GM12878 (cell line): ENCODE measurements at regions of chr22 and their contacts with region 1.

Region 1: DNA sequence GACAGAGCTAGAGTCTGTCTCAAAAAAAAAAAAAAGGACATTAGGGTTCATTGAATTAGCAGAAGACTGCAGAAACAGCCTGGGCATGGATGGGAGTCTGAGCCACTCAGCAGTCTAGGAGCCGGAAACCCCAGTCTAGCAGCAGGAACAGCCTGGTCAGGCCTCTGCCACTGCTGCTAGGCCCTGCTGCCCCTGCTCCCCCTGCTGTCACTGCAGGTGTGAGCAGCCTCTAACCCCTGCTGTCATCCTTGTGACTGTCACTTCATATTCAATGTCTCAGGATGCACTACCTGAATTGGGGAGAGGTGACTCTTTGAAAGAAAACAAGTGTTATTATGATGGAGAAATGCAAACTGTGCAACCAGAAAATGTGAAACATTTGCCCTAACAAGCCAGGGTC is 7.0 kb upstream of the DDX17 start:
- DNase-seq: no peak
- ATAC-seq: peak; percentile 88
- H3K4me3 ChIP-seq: no peak overlapping the region
- H3K27ac ChIP-seq: no peak overlapping the region
- H3K4me1 ChIP-seq: no peaks in the 10 kb centered on the region
- H3K27me3 ChIP-seq: no peaks in the 10 kb centered on the region
- CTCF ChIP-seq: peak; percentile 41 to 62 (median 46); a peak in 5 of 6 replicates
- EP300 ChIP-seq: no peak
- POLR2A ChIP-seq: no peak
- RAD21 ChIP-seq: peak; percentile 38; the same call in 1 of the 2 replicates

Region 2: DNA sequence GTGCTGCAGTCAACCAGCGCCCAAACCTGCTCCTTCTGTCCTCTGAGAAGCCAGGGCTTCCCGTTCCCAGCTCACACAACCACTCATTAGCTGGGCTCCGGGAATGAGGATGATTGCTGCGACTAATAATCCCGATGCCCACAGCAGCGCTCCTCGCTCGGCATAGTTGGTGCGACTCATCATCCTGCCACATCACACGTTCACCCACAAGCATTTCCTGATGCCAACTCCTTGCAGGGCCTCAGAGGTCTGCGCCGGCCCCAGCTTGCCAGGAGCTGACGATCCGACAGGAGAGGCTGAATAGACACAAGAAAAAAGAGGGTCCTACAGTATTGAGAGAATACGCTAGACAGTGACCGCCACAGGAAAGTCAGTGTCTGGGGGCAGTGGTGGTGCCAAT is 185.3 kb before region 1 on chr22:
- CTCF ChIA-PET with region 1: no interaction called
- POLR2A ChIA-PET with region 1: no interaction called
- RAD21 ChIA-PET with region 1: no interaction called
- SMC1A ChIA-PET with region 1: no interaction called
- in situ Hi-C with region 1: no loop called
- intact Hi-C with region 1: no loop called
- DNase-seq: no peak
- ATAC-seq: no peak
- H3K4me3 ChIP-seq: no peak overlapping the region
- H3K27ac ChIP-seq: no peak overlapping the region
- H3K4me1 ChIP-seq: no peaks in the 10 kb centered on the region
- H3K27me3 ChIP-seq: no peaks in the 10 kb centered on the region; a peak in 1 of 4 replicates
- CTCF ChIP-seq: no peak
- EP300 ChIP-seq: no peak
- POLR2A ChIP-seq: no peak
- RAD21 ChIP-seq: no peak

Region 3: DNA sequence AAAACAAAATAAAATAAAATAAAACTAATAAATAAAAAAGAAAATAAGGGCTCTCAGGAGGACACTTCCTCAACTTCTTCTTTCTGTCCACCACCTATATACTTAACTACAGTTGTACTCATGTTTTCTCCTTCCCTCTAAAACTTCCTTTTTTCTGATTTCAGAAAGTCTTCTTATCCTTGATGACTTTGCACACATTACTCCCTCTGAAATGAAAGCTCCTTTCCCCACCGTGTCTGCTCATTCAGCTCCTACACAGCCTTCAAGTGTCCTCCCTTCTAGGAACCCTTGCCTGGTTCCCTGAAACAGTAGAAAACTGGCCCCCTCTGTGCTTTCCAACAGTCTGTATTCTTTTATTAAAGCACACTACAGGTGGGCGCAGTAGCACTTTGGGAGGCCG is 11.4 kb after region 1 on chr22:
- CTCF ChIA-PET with region 1: interaction called, 13 read pairs
- POLR2A ChIA-PET with region 1: no interaction called
- RAD21 ChIA-PET with region 1: no interaction called
- SMC1A ChIA-PET with region 1: interaction called, 3 read pairs
- in situ Hi-C with region 1: no loop called
- intact Hi-C with region 1: no loop called
- DNase-seq: no peak
- ATAC-seq: no peak
- H3K4me3 ChIP-seq: no peak overlapping the region
- H3K27ac ChIP-seq: no peak overlapping the region
- H3K4me1 ChIP-seq: no peaks in the 10 kb centered on the region
- H3K27me3 ChIP-seq: no peaks in the 10 kb centered on the region
- CTCF ChIP-seq: no peak
- EP300 ChIP-seq: no peak
- POLR2A ChIP-seq: no peak
- RAD21 ChIP-seq: no peak